MCF 10A (cell line): ENCODE measurements at regions of chrX and their contacts with region 1.

Region 1: GRCh38 chrX:120603707-120604360 is at the start of gene MCTS1:
- DNase-seq: peak; percentile 95
- H3K4me3 Mint-ChIP-seq: peak within 1 kb of the TSS; percentile 94
- H3K27ac Mint-ChIP-seq: peak within 1 kb of the TSS; percentile 97
- H3K4me1 Mint-ChIP-seq: no peaks in the 10 kb centered on the region
- H3K27me3 Mint-ChIP-seq: peaks cover 15% of the 10 kb centered on the region
- CTCF ChIP-seq: no peak
- total RNA-seq, gene MCTS1: 64.9 and 73.7 TPM in 2 replicates

Region 2: DNA sequence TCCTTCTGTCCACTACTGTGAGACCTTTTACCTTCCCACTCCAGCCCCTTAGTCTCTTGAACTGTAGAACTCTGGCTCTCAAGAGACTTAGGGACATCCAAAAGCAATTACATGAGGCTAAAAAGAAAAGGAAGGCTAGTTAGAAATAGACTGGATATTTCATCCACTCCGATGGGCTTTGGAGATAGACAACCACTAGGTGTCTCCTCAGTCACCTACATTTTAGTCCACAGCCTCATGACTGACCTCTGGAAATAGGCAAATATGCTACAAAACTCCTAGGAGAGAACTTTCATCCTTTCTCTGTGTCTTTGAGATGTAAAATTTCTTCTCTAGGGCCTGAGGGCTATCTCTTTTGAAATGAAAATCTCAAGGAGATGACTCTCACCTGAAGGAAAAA is 89.6 kb before region 1 on chrX:
- CTCF ChIA-PET with region 1: interaction called, 4 read pairs
- POLR2A ChIA-PET with region 1: interaction called, 4 read pairs
- intact Hi-C with region 1: loop called (anchors 10 kb)
- DNase-seq: peak; percentile 47
- H3K4me3 Mint-ChIP-seq: no peak overlapping the region
- H3K27ac Mint-ChIP-seq: no peak overlapping the region
- H3K4me1 Mint-ChIP-seq: peaks cover 6% of the 10 kb centered on the region
- H3K27me3 Mint-ChIP-seq: peaks cover 18% of the 10 kb centered on the region
- CTCF ChIP-seq: peak; percentile 40

Region 3: GRCh38 chrX:120549483-120550452 is 54.1 kb before region 1 on chrX:
- CTCF ChIA-PET with region 1: no interaction called
- POLR2A ChIA-PET with region 1: interaction called, 18 read pairs
- intact Hi-C with region 1: no loop called
- DNase-seq: peak; percentile 90
- H3K4me3 Mint-ChIP-seq: peak overlapping the region; percentile 47
- H3K27ac Mint-ChIP-seq: peak overlapping the region; percentile 61
- H3K4me1 Mint-ChIP-seq: peaks cover 12% of the 10 kb centered on the region
- H3K27me3 Mint-ChIP-seq: peaks cover 9% of the 10 kb centered on the region
- CTCF ChIP-seq: no peak

Region 4: GRCh38 chrX:120560842-120561633 is 42.8 kb before region 1 on chrX and contains the start of gene CUL4B:
- CTCF ChIA-PET with region 1: interaction called, 5 read pairs
- POLR2A ChIA-PET with region 1: interaction called, 148 read pairs
- intact Hi-C with region 1: loop called (anchors 1 kb)
- DNase-seq: peak; percentile 96
- H3K4me3 Mint-ChIP-seq: peak within 1 kb of the TSS; percentile 72
- H3K27ac Mint-ChIP-seq: peak within 1 kb of the TSS; percentile 36
- H3K4me1 Mint-ChIP-seq: peaks cover 6% of the 10 kb centered on the region
- H3K27me3 Mint-ChIP-seq: peaks cover 13% of the 10 kb centered on the region
- CTCF ChIP-seq: no peak
- total RNA-seq, gene CUL4B: 29.5 and 29.6 TPM in 2 replicates

Region 5: GRCh38 chrX:120568035-120568434 is 35.8 kb before region 1 on chrX:
- CTCF ChIA-PET with region 1: no interaction called
- POLR2A ChIA-PET with region 1: interaction called, 148 read pairs
- intact Hi-C with region 1: no loop called
- DNase-seq: peak; percentile 14
- H3K4me3 Mint-ChIP-seq: no peak overlapping the region
- H3K27ac Mint-ChIP-seq: no peak overlapping the region
- H3K4me1 Mint-ChIP-seq: no peaks in the 10 kb centered on the region
- H3K27me3 Mint-ChIP-seq: peaks cover 13% of the 10 kb centered on the region
- CTCF ChIP-seq: no peak